Heart right ventricle (tissue), 16 donors: ENCODE measurements at regions of chr7 and their contacts with region 1.

Region 1: GRCh38 chr7:135862586-135863340 is 114.2 kb upstream of the FAM180A start:
- DNase-seq: no peak
- ATAC-seq: peak in 3 of 8 donors; percentile 13 to 22 (median 17)
- H3K4me3 ChIP-seq: no peak overlapping the region
- H3K27ac ChIP-seq: no peak overlapping the region
- H3K4me1 ChIP-seq: peaks cover 0 to 4% (median 0%) of the 10 kb centered on the region in 9 donors
- H3K27me3 ChIP-seq: no peaks in the 10 kb centered on the region
- CTCF ChIP-seq: no peak

Region 2: DNA sequence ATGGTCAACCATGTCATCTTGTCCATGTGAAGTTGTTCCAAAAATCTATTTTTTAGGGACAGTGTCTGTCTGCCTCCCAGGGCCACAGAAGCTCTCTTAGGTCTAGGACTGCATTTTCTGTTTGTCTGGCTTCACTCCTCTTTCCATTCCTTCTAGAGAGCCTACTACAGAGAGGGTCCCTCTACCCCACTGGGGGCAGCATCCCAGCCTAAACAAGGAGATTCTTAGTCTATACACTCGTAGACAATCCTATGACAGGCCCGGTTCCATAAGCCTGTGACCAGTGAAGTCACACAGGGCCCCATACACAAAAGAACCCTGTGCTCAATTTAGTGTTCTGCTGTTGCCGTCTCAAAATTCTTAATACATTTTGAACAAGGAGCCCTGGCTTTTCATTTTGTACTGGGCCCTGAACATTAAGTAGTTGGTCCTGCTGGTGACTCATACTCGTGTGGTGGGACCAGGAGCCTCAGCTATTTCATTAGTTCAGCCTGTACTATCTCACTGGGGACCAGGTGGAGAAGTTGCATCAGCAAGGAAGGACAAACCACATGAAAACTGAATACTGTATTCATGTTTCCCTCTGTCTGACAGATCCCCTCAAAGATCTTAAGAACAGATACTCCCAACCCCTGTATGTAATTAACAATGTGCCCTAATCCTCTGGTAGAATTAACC is 90.7 kb before region 1 on chr7:
- intact Hi-C with region 1: no loop called
- DNase-seq: no peak
- ATAC-seq: peak in 1 of 8 donors; percentile 38
- H3K4me3 ChIP-seq: no peak overlapping the region
- H3K27ac ChIP-seq: peak overlapping the region in 5 of 10 donors; percentile 30 to 91 (median 83)
- H3K4me1 ChIP-seq: peaks cover 5 to 67% (median 27%) of the 10 kb centered on the region in 9 donors
- H3K27me3 ChIP-seq: no peaks in the 10 kb centered on the region
- CTCF ChIP-seq: no peak

Region 3: GRCh38 chr7:137110091-137110509 is 1247.3 kb after region 1 on chr7:
- intact Hi-C with region 1: loop called in 1 of 10 experiments (anchors 5 kb)
- DNase-seq: no peak
- ATAC-seq: no peak
- H3K4me3 ChIP-seq: no peak overlapping the region
- H3K27ac ChIP-seq: no peak overlapping the region
- H3K4me1 ChIP-seq: no peaks in the 10 kb centered on the region
- H3K27me3 ChIP-seq: no peaks in the 10 kb centered on the region
- CTCF ChIP-seq: no peak